ENCODE measurements at regions of chr7 and their contacts with region 1.

Region 1: GRCh38 chr7:158563911-158564662 is 23.5 kb downstream of the PTPRN2 start:
- DNase-seq: no peak
- ATAC-seq: no peak
- H3K4me3 ChIP-seq: no peak overlapping the region
- H3K27ac ChIP-seq: no peak overlapping the region
- H3K4me1 ChIP-seq: peaks cover 0 to 1% of the 10 kb centered on the region in 2 experiments; a peak in 1 of 5 replicates
- H3K27me3 ChIP-seq: peaks cover 67 to 82% of the 10 kb centered on the region in 2 experiments
- CTCF ChIP-seq: no peak
- EP300 ChIP-seq: no peak
- POLR2A ChIP-seq: no peak
- RAD21 ChIP-seq: no peak

Region 2: DNA sequence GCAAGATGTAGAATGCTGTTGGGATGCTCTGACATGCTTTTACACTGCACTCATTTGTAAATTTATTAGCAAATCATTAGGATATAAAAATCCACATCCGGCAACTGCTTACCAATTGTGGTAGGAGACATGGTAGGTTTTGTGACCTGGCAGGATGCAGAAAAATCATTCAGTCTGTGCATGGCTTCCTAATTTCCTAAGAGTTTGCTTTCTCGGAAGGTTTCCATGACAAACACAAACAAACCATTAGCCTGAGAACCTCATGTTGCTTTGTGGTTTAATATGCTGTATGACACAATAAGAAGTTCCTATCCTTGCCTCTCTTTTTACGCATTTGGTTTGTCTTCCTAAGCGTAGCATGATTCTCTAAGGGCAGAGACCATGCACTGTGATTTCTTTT is 1656.4 kb before region 1 on chr7:
- CTCF ChIA-PET with region 1: no interaction called
- POLR2A ChIA-PET with region 1: no interaction called
- in situ Hi-C with region 1: no loop called
- intact Hi-C with region 1: no loop called
- DNase-seq: no peak
- ATAC-seq: no peak
- H3K4me3 ChIP-seq: no peak overlapping the region
- H3K27ac ChIP-seq: no peak overlapping the region
- H3K4me1 ChIP-seq: peaks cover 3 to 5% of the 10 kb centered on the region in 2 experiments; a peak in 3 of 5 replicates
- H3K27me3 ChIP-seq: no peaks in the 10 kb centered on the region
- CTCF ChIP-seq: no peak
- EP300 ChIP-seq: no peak
- POLR2A ChIP-seq: no peak
- RAD21 ChIP-seq: no peak

Region 3: GRCh38 chr7:157466867-157467261 is 1097.2 kb before region 1 on chr7:
- CTCF ChIA-PET with region 1: no interaction called
- POLR2A ChIA-PET with region 1: no interaction called
- in situ Hi-C with region 1: no loop called
- intact Hi-C with region 1: loop called (anchors 5 kb)
- DNase-seq: peak in 2 of 4 experiments; percentile 30 to 67
- ATAC-seq: peak; percentile 77
- H3K4me3 ChIP-seq: no peak overlapping the region
- H3K27ac ChIP-seq: no peak overlapping the region; the same call in 2 of the 3 replicates
- H3K4me1 ChIP-seq: peaks cover 0 to 30% of the 10 kb centered on the region in 2 experiments; a peak in 3 of 5 replicates
- H3K27me3 ChIP-seq: peaks cover 66 to 73% of the 10 kb centered on the region in 2 experiments
- CTCF ChIP-seq: peak; percentile 45 to 60 (median 47); a peak in 4 of 6 replicates
- EP300 ChIP-seq: no peak
- POLR2A ChIP-seq: no peak
- RAD21 ChIP-seq: peak in 1 of 2 experiments; percentile 40; a peak in 2 of 4 replicates

Region 4: DNA sequence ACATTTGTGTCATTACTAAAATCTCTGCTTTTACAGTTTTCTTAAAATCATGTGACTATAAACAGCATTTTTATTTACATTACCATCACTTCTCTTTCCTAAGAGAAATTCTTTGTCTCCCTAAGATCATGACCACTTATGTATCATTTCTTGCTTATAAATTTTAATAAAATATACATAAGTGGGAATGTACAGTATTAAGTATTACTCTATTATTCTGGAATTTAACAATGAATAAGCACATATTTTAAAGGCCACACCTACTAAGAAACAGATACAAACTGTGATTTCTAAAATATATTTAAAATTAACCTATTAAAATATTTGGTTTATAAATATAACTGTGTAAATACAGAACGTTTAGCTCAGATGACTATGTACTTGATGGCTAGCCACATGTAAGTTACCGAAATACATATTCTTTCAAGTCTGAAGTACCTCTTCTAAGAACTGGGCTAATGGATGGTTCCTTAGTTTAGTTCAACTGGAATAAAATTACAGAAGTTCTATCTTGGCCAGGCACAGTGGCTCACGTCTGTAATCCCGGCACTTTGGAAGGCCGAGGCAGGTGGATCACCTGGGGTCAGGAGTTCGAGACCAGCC is 56.9 kb after region 1 on chr7:
- CTCF ChIA-PET with region 1: no interaction called
- POLR2A ChIA-PET with region 1: no interaction called
- in situ Hi-C with region 1: no loop called
- intact Hi-C with region 1: no loop called
- DNase-seq: no peak
- ATAC-seq: no peak
- H3K4me3 ChIP-seq: no peak overlapping the region
- H3K27ac ChIP-seq: no peak overlapping the region
- H3K4me1 ChIP-seq: peaks cover 14 to 18% of the 10 kb centered on the region in 2 experiments
- H3K27me3 ChIP-seq: no peaks in the 10 kb centered on the region
- CTCF ChIP-seq: no peak
- EP300 ChIP-seq: no peak
- POLR2A ChIP-seq: no peak
- RAD21 ChIP-seq: no peak

Measured in K562 (cell line).